CD4-positive, alpha-beta T cell (primary cell): ENCODE measurements at regions of chr6 and their contacts with region 1.

Region 1: DNA sequence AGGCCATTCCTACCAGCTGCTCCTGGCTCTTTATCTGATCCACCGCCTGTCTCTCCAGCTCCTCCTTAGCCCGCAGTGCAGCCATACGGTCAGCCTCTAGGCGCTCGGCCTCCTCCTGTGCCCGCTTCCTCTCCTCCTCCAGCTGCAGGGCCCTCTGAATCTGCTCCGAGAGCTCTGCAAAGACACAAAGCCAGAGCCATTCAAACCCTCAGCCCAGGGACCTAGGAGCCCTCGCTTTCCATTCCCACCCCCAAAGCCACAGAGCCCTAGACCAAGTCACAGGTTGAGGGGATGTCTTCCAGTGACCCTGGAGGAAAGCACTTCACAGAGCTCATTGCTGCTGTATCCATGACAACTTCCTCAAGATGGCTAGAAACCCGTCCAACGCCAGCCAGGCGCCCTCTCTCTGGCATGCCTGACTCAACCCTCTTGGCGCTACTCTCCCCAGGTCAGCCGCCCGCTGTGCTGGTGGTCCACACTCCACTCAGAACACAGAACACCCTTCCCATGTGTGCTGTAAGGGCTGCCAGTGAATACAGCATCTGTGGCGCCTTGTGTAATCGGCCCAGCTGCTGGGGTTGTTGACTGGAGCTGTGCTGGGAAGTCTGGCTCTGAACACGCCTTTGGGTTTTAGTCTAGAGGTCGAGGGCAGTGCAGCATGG is 49.3 kb downstream of the EZR start:
- DNase-seq: peak in 1 of 14 experiments; percentile 41
- ATAC-seq: no peak
- H3K4me3 ChIP-seq: no peak overlapping the region
- H3K4me3 Mint-ChIP-seq: peak overlapping the region; percentile 38
- H3K27ac ChIP-seq: no peak overlapping the region
- H3K27ac Mint-ChIP-seq: peak overlapping the region; percentile 74
- H3K4me1 ChIP-seq: peaks cover 44% of the 10 kb centered on the region
- H3K4me1 Mint-ChIP-seq: peaks cover 47% of the 10 kb centered on the region
- H3K27me3 ChIP-seq: no peaks in the 10 kb centered on the region
- H3K27me3 Mint-ChIP-seq: peaks cover 5% of the 10 kb centered on the region
- CTCF ChIP-seq: no peak

Region 2: DNA sequence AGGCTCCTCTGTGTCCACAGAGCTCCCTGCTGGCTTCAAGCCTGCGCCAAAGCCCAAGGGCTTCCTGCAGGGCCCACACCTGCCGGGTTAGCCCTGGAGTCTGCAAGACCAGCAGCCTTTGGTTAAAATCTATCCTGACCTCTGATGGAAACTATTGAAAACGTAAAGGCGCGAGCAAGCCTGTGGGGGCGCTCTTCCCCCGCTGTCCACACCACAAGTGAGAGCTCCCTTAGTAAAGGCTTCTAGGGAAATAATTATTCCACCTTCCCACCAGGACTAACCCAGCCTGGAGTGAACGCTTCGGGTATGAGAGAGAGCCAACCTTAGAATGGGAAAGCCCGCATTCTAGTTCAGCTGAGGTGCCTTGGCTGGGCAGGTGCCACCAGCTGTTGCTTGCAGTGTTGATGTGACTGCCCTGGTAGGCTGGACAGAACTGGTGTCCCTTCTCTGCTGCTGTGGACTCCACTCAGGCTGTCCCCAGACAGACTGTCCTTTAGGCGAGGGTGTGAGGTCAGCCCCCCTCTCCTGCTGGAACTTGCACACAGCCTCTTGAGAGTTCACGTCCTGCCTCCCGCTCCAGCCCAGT is 51.3 kb before region 1 on chr6:
- CTCF ChIA-PET with region 1: no interaction called
- POLR2A ChIA-PET with region 1: no interaction called
- intact Hi-C with region 1: loop called in 1 of 2 experiments (anchors 10 kb)
- DNase-seq: peak in 2 of 14 experiments; percentile 17 to 20
- ATAC-seq: no peak
- H3K4me3 ChIP-seq: no peak overlapping the region
- H3K4me3 Mint-ChIP-seq: no peak overlapping the region
- H3K27ac ChIP-seq: peak overlapping the region in 1 of 2 donors; percentile 73
- H3K27ac Mint-ChIP-seq: no peak overlapping the region
- H3K4me1 ChIP-seq: peaks cover 64% of the 10 kb centered on the region
- H3K4me1 Mint-ChIP-seq: peaks cover 41% of the 10 kb centered on the region
- H3K27me3 ChIP-seq: no peaks in the 10 kb centered on the region
- H3K27me3 Mint-ChIP-seq: no peaks in the 10 kb centered on the region
- CTCF ChIP-seq: no peak